Head of caudate nucleus (tissue), 42 donors: ENCODE measurements at regions of chr12 and their contacts with region 1.

Region 1: DNA sequence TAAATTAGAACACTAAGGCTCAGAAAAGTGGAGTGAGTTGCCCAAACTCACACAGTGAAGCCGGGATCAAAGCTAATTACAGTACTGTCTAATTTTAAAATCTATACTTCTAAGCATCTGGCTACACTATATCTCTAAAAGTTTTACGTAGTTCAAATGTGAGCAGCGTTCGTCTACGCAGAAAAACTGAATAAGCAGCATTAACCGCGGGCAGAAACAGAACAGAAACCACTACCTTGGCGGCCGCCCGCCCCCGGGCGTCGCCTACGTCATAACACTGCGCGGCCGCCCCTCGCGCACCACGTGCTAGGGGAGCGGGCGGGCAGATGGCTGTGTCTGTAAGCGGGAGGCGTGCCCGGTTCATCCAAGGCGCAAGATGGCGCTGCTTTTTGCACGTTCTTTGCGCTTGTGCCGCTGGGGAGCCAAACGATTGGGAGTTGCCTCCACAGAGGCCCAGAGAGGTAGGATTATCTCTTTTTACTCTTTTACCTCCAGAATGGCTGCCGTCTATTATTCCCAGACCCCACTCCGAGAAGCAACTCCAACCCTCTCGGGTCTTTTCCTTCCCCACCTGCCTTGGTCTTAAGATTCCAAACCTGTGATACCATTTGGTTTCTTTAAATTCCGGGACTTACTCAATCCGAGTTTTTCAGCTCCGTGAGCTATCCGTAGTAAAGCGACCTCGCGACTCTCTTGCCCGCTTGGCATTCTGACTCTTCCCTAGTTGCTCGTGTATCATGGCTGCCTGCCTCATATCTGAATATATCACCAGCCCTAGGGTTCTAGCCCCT is at the start of gene SPRYD4:
- DNase-seq: peak; percentile 91 to 98 (median 96)

Region 2: GRCh38 chr12:56333679-56334489 is 134.5 kb before region 1 on chr12 and contains the start of gene PAN2:
- intact Hi-C with region 1: loop called (anchors 5 kb)
- DNase-seq: peak; percentile 90 to 98 (median 96)

Region 3: GRCh38 chr12:56601503-56601902 is 133.1 kb after region 1 on chr12:
- intact Hi-C with region 1: no loop called
- DNase-seq: no peak